Astrocyte of the cerebellum (primary cell): ENCODE measurements at regions of chr5 and their contacts with region 1.

Region 1: DNA sequence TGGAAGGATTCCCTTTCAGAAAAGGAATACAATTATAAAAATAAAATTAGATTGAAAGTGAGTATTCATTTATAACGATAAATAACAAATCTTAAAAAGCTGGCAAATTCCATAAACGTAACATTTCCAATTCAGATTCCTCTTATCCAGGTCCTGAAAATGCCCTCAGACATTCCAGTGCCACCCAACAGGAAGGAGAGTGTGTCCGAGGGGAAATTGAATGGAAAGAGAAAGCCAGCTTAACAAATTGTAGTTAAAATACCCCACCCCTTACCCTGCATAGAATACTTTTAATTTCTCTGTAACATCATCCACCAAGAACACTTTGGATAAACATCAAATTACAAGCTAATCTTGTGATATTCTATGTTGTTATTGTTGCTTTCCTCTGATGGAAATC is 72.0 kb downstream of the ARHGEF28 start:
- DNase-seq: no peak
- H3K4me3 ChIP-seq: no peak overlapping the region
- CTCF ChIP-seq: no peak

Region 2: GRCh38 chr5:73663860-73664240 is 34.2 kb before region 1 on chr5:
- in situ Hi-C with region 1: loop called (anchors 5 kb)
- DNase-seq: no peak
- H3K4me3 ChIP-seq: no peak overlapping the region
- CTCF ChIP-seq: no peak